A549 (cell line): ENCODE measurements at regions of chr7 and their contacts with region 1.

Region 1: GRCh38 chr7:73612598-73613269 is 11.6 kb downstream of the MLXIPL start:
- DNase-seq: peak; percentile 97 to 98
- ATAC-seq: peak; percentile 95
- H3K4me3 ChIP-seq: no peak overlapping the region
- H3K27ac ChIP-seq: peak overlapping the region; percentile 75 to 79
- H3K4me1 ChIP-seq: peaks cover 42% of the 10 kb centered on the region
- CTCF ChIP-seq: peak; percentile 77
- EP300 ChIP-seq: peak; percentile 62 to 75; a peak in 2 of 5 replicates
- POLR2A ChIP-seq: no peak
- RAD21 ChIP-seq: peak; percentile 87 to 93

Region 2: GRCh38 chr7:73599151-73599882 is 13.4 kb before region 1 on chr7:
- CTCF ChIA-PET with region 1: interaction called, 93 read pairs
- POLR2A ChIA-PET with region 1: no interaction called
- DNase-seq: no peak
- ATAC-seq: peak in 1 of 2 experiments; percentile 36; a peak in 2 of 6 replicates
- H3K4me3 ChIP-seq: no peak overlapping the region
- H3K27ac ChIP-seq: no peak overlapping the region; a peak in 1 of 6 replicates
- H3K4me1 ChIP-seq: no peaks in the 10 kb centered on the region
- CTCF ChIP-seq: no peak
- EP300 ChIP-seq: no peak
- POLR2A ChIP-seq: no peak
- RAD21 ChIP-seq: no peak

Region 3: GRCh38 chr7:73647725-73648592 is 35.2 kb after region 1 on chr7:
- CTCF ChIA-PET with region 1: interaction called, 22 read pairs
- POLR2A ChIA-PET with region 1: no interaction called
- DNase-seq: peak in 1 of 2 experiments; percentile 43
- ATAC-seq: peak; percentile 81 to 84
- H3K4me3 ChIP-seq: peak overlapping the region; percentile 68
- H3K27ac ChIP-seq: peak overlapping the region; percentile 91 to 95
- H3K4me1 ChIP-seq: peaks cover 13% of the 10 kb centered on the region; the same call in 2 of the 3 replicates
- CTCF ChIP-seq: peak; percentile 50
- EP300 ChIP-seq: no peak
- POLR2A ChIP-seq: no peak
- RAD21 ChIP-seq: peak in 1 of 2 experiments; percentile 49; a peak in 1 of 5 replicates

Region 4: DNA sequence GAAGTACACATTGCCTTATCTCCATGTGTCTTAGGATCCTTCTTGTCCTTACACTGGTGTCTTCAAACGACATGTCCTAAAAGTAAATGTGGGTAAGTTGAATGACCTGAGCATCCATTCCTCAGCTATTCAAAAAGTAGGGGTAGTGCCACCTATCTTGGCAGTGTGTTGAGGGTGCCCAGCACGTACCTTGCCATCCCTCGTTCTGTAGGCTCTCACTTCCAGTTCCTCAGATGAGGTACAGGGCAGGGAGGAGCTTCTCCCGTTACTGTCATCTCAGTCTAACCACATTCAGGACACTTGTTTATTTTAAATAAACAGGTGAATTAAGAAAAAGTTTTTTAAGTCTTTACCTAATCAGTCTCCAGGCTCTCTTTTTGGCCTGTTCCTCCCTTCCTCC is 83.6 kb after region 1 on chr7:
- CTCF ChIA-PET with region 1: interaction called, 71 read pairs
- POLR2A ChIA-PET with region 1: no interaction called
- DNase-seq: no peak
- ATAC-seq: no peak
- H3K4me3 ChIP-seq: no peak overlapping the region
- H3K27ac ChIP-seq: no peak overlapping the region
- H3K4me1 ChIP-seq: peaks cover 28% of the 10 kb centered on the region
- CTCF ChIP-seq: no peak
- EP300 ChIP-seq: no peak
- POLR2A ChIP-seq: no peak
- RAD21 ChIP-seq: no peak

Region 5: GRCh38 chr7:73718905-73719805 is 106.4 kb after region 1 on chr7 and contains the start of gene STX1A:
- CTCF ChIA-PET with region 1: interaction called, 290 read pairs
- POLR2A ChIA-PET with region 1: interaction called, 3 read pairs
- DNase-seq: peak in 1 of 2 experiments; percentile 66
- ATAC-seq: peak; percentile 17 to 32; a peak in 5 of 6 replicates
- H3K4me3 ChIP-seq: peak within 1 kb of the TSS; percentile 100
- H3K27ac ChIP-seq: peak within 1 kb of the TSS; percentile 99 to 100
- H3K4me1 ChIP-seq: peaks cover 65% of the 10 kb centered on the region
- CTCF ChIP-seq: no peak
- EP300 ChIP-seq: no peak
- POLR2A ChIP-seq: peak; percentile 63
- RAD21 ChIP-seq: no peak
- polyA plus RNA-seq, gene STX1A: 72.9 and 81.7 TPM in 2 replicates